ENCODE measurements at regions of chr11 and their contacts with region 1.

Region 1: GRCh38 chr11:130526846-130527245 is 78.4 kb downstream of the ADAMTS15 start:
- DNase-seq: no peak
- H3K4me3 Mint-ChIP-seq: no peak overlapping the region
- H3K27ac Mint-ChIP-seq: no peak overlapping the region
- H3K4me1 Mint-ChIP-seq: no peaks in the 10 kb centered on the region
- H3K27me3 Mint-ChIP-seq: peaks cover 2% of the 10 kb centered on the region

Region 2: GRCh38 chr11:130420478-130421198 is 106.2 kb before region 1 on chr11:
- intact Hi-C with region 1: no loop called
- DNase-seq: no peak
- H3K4me3 Mint-ChIP-seq: no peak overlapping the region
- H3K27ac Mint-ChIP-seq: no peak overlapping the region
- H3K4me1 Mint-ChIP-seq: no peaks in the 10 kb centered on the region
- H3K27me3 Mint-ChIP-seq: peaks cover 9% of the 10 kb centered on the region

Region 3: DNA sequence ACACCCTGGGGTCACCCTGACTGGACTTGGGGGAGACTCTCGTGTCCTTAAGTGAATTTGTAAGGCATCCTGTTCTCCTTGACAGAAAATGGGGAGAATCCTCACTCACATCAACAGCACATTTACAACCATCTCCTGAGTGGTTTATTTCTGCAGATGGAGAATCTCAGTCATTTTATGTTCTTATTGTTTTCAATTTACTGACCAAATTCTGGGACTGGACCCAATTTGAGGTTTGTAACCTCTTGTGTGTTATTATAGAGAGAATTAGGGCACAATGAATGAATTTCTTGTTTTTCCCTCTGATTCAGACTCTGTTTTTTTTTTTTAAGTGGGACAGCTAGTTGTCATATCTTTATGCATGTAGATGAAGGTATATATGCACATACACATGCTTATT is 26.5 kb after region 1 on chr11:
- intact Hi-C with region 1: loop called (anchors 1 kb)
- DNase-seq: no peak
- H3K4me3 Mint-ChIP-seq: no peak overlapping the region
- H3K27ac Mint-ChIP-seq: no peak overlapping the region
- H3K4me1 Mint-ChIP-seq: no peaks in the 10 kb centered on the region
- H3K27me3 Mint-ChIP-seq: peaks cover 12% of the 10 kb centered on the region